ENCODE measurements at regions of chr17 and their contacts with region 1.

Region 1: DNA sequence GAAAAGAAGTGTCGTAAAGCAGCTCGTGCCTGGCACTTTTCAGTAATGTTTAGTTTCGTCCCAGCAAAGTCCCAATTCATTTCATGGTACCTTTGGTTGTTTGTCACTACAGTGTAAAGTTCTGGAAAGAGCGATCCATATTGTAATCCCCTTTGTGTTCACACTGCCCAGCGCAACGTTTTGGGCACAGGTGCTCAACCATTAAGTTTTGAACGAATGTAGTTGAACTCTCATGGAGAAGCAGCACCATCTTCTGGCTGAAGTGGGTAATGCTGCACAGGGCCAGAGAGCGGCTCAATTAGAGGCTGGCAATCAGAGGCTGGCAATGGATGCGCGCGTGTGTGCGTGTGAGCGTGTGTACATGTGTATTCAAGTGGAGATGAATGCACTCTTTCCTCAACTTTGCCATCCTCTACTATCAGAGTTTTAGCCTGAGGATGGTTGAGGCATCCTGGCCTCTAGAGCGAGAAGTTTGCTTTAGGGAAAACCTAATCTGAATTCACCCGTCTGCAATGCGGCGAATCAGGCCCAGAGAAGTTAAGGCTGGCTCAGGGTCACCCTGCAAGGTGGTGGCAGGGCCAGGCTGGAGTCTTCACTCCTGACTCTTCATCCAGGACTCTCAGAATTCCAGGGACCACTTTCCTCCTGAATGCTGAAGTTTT is 29.9 kb downstream of the DYNLL2 start:
- DNase-seq: peak; percentile 77 to 81 (median 79)
- H3K4me3 ChIP-seq: no peak overlapping the region
- H3K4me3 Mint-ChIP-seq: no peak overlapping the region
- H3K27ac ChIP-seq: no peak overlapping the region
- H3K27ac Mint-ChIP-seq: peak overlapping the region in 2 of 7 donors; percentile 14 to 69
- H3K4me1 ChIP-seq: no peaks in the 10 kb centered on the region
- H3K4me1 Mint-ChIP-seq: peaks cover 0 to 4% (median 2%) of the 10 kb centered on the region in 4 donors
- H3K27me3 ChIP-seq: no peaks in the 10 kb centered on the region
- H3K27me3 Mint-ChIP-seq: peaks cover 3 to 8% of the 10 kb centered on the region in 2 donors

Region 2: GRCh38 chr17:57455063-57455914 is 657.8 kb before region 1 on chr17:
- CTCF ChIA-PET with region 1: no interaction called
- POLR2A ChIA-PET with region 1: no interaction called
- intact Hi-C with region 1: no loop called
- DNase-seq: peak in 4 of 5 donors; percentile 12 to 26 (median 16)
- H3K4me3 ChIP-seq: no peak overlapping the region
- H3K4me3 Mint-ChIP-seq: peak overlapping the region in 7 of 8 donors; percentile 65 to 83 (median 74)
- H3K27ac ChIP-seq: no peak overlapping the region
- H3K27ac Mint-ChIP-seq: peak overlapping the region; percentile 54 to 90 (median 79)
- H3K4me1 ChIP-seq: peaks cover 66% of the 10 kb centered on the region
- H3K4me1 Mint-ChIP-seq: peaks cover 52 to 85% (median 63%) of the 10 kb centered on the region in 4 donors
- H3K27me3 ChIP-seq: no peaks in the 10 kb centered on the region
- H3K27me3 Mint-ChIP-seq: no peaks in the 10 kb centered on the region

Region 3: GRCh38 chr17:57747221-57748017 is 365.7 kb before region 1 on chr17:
- CTCF ChIA-PET with region 1: no interaction called
- POLR2A ChIA-PET with region 1: no interaction called
- intact Hi-C with region 1: loop called (anchors 2 kb)
- DNase-seq: peak; percentile 45 to 57 (median 49)
- H3K4me3 ChIP-seq: no peak overlapping the region
- H3K4me3 Mint-ChIP-seq: no peak overlapping the region
- H3K27ac ChIP-seq: no peak overlapping the region
- H3K27ac Mint-ChIP-seq: peak overlapping the region in 1 of 7 donors; percentile 37
- H3K4me1 ChIP-seq: no peaks in the 10 kb centered on the region
- H3K4me1 Mint-ChIP-seq: peaks cover 0 to 1% (median 0%) of the 10 kb centered on the region in 4 donors
- H3K27me3 ChIP-seq: no peaks in the 10 kb centered on the region
- H3K27me3 Mint-ChIP-seq: peaks cover 3 to 9% of the 10 kb centered on the region in 2 donors

Region 4: GRCh38 chr17:57861000-57861789 is 251.9 kb before region 1 on chr17:
- CTCF ChIA-PET with region 1: interaction called, 53 read pairs
- POLR2A ChIA-PET with region 1: interaction called, 3 read pairs
- intact Hi-C with region 1: loop called (anchors 1 kb)
- DNase-seq: peak; percentile 25 to 61 (median 32)
- H3K4me3 ChIP-seq: peak overlapping the region; percentile 52 to 66
- H3K4me3 Mint-ChIP-seq: peak overlapping the region; percentile 82 to 96 (median 86)
- H3K27ac ChIP-seq: no peak overlapping the region
- H3K27ac Mint-ChIP-seq: peak overlapping the region; percentile 13 to 75 (median 71)
- H3K4me1 ChIP-seq: peaks cover 13% of the 10 kb centered on the region
- H3K4me1 Mint-ChIP-seq: peaks cover 9 to 20% (median 14%) of the 10 kb centered on the region in 4 donors
- H3K27me3 ChIP-seq: no peaks in the 10 kb centered on the region
- H3K27me3 Mint-ChIP-seq: peaks cover 4 to 8% of the 10 kb centered on the region in 2 donors

Region 5: GRCh38 chr17:57916925-57917858 is 195.9 kb before region 1 on chr17:
- CTCF ChIA-PET with region 1: no interaction called
- POLR2A ChIA-PET with region 1: no interaction called
- intact Hi-C with region 1: loop called (anchors 1 kb)
- DNase-seq: peak in 4 of 5 donors; percentile 10 to 27 (median 23)
- H3K4me3 ChIP-seq: no peak overlapping the region
- H3K4me3 Mint-ChIP-seq: no peak overlapping the region
- H3K27ac ChIP-seq: no peak overlapping the region
- H3K27ac Mint-ChIP-seq: no peak overlapping the region
- H3K4me1 ChIP-seq: no peaks in the 10 kb centered on the region
- H3K4me1 Mint-ChIP-seq: no peaks in the 10 kb centered on the region
- H3K27me3 ChIP-seq: no peaks in the 10 kb centered on the region
- H3K27me3 Mint-ChIP-seq: peaks cover 2% of the 10 kb centered on the region in 2 donors

Region 6: DNA sequence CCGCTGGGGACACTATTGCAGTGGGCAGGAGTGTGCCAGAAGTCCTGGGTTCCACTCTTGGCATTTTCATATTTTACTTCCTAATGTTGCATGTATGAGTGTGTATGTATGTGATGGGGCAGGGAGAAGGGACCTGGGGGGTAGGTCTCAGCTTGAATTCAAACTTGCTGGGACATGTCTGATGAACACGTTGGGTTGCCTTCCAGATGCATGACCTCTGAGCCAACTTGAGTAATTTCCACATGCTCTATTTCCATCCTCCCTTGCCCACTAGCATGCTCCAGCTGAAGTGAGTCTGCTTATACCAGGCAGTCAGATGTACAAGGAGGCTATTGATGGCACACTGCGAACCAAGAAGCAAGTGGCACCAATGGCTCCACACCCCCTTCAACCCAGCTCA is 73.1 kb before region 1 on chr17:
- CTCF ChIA-PET with region 1: no interaction called
- POLR2A ChIA-PET with region 1: no interaction called
- intact Hi-C with region 1: no loop called
- DNase-seq: no peak
- H3K4me3 ChIP-seq: no peak overlapping the region
- H3K4me3 Mint-ChIP-seq: no peak overlapping the region
- H3K27ac ChIP-seq: no peak overlapping the region
- H3K27ac Mint-ChIP-seq: no peak overlapping the region
- H3K4me1 ChIP-seq: no peaks in the 10 kb centered on the region
- H3K4me1 Mint-ChIP-seq: no peaks in the 10 kb centered on the region
- H3K27me3 ChIP-seq: no peaks in the 10 kb centered on the region
- H3K27me3 Mint-ChIP-seq: peaks cover 19 to 36% of the 10 kb centered on the region in 2 donors

Region 7: DNA sequence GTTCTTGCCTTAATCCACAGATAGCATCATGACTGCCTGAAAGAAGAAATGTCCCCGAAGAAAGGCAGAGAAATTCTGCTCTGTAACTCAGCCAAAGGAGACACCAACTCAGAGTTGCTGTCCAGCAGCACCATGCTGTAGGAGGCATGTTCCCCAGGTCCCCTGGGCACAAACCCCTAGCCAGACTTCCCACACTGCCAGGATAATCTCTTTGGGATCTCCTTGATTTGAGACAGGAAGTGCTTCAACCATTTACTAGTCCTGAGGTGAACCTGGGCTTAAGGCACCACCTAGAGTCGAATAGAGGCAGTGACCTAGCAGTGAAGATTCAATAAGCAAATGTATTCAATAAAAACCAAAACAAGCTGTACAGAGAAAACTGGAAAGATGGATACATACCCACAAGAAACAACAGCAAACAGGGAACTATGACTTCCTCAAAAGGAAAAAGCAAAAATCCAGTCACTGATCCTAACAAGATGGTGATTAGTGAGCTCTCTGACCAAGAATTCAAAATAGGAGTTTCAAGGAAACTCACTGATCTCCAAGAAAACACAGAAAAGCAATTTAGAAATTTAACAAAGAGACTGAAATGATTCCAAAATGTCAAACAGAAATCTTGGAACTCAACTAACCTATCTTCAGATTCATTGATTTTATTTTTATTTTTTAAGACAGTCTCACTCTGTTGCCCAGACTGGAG is 59.4 kb after region 1 on chr17:
- CTCF ChIA-PET with region 1: interaction called, 18 read pairs
- POLR2A ChIA-PET with region 1: interaction called, 3 read pairs
- intact Hi-C with region 1: no loop called
- DNase-seq: peak; percentile 62 to 72 (median 66)
- H3K4me3 ChIP-seq: no peak overlapping the region
- H3K4me3 Mint-ChIP-seq: peak overlapping the region; percentile 16 to 69 (median 51)
- H3K27ac ChIP-seq: no peak overlapping the region
- H3K27ac Mint-ChIP-seq: peak overlapping the region in 6 of 7 donors; percentile 15 to 92 (median 89)
- H3K4me1 ChIP-seq: peaks cover 47% of the 10 kb centered on the region
- H3K4me1 Mint-ChIP-seq: peaks cover 40 to 50% (median 44%) of the 10 kb centered on the region in 4 donors
- H3K27me3 ChIP-seq: no peaks in the 10 kb centered on the region
- H3K27me3 Mint-ChIP-seq: peaks cover under 1% of the 10 kb centered on the region in 2 donors

Measured in CD4-positive, alpha-beta memory T cell (primary cell).